ENCODE measurements at regions of chr9 and their contacts with region 1.

Region 1: GRCh38 chr9:37913480-37914153 is 9.7 kb upstream of the SLC25A51 start:
- DNase-seq: peak; percentile 65
- H3K4me3 ChIP-seq: no peak overlapping the region
- H3K27ac ChIP-seq: no peak overlapping the region
- H3K4me1 ChIP-seq: peaks cover 18% of the 10 kb centered on the region
- H3K27me3 ChIP-seq: no peaks in the 10 kb centered on the region
- CTCF ChIP-seq: peak; percentile 96 to 98

Region 2: DNA sequence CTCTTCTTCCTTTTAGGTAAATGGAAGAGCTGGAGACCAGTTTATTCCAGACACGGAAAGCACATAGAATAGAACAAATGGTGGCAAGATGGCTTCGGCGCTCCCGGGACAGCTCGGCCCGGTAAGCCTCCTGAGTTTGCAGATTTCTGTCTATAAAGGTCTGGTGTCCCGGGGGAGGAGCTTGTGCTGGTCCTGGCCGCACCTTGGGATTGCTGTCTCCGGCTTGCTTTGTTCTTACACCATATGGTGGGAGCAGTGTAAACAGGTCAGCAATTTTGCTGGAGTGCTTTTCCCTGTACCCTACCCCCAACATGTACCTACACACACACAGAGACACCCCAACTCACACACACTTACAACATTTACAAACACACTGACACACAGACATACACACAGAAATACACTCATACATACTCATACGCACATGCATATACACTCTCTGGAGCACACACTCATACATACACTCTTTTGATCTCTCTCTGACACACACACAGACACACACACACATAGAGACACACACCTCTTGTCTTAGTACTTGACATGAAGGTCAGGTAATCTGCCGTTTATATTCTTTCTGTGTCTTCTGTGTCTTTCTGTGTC is 220.9 kb before region 1 on chr9:
- CTCF ChIA-PET with region 1: no interaction called
- dilution Hi-C with region 1: no loop called
- in situ Hi-C with region 1: no loop called
- intact Hi-C with region 1: no loop called
- DNase-seq: no peak
- H3K4me3 ChIP-seq: no peak overlapping the region
- H3K27ac ChIP-seq: no peak overlapping the region
- H3K4me1 ChIP-seq: no peaks in the 10 kb centered on the region
- H3K27me3 ChIP-seq: peaks cover 4% of the 10 kb centered on the region
- CTCF ChIP-seq: no peak

Region 3: GRCh38 chr9:37976714-37977477 is 63.3 kb after region 1 on chr9:
- CTCF ChIA-PET with region 1: no interaction called
- dilution Hi-C with region 1: no loop called
- in situ Hi-C with region 1: no loop called
- intact Hi-C with region 1: no loop called
- DNase-seq: peak; percentile 79
- H3K4me3 ChIP-seq: no peak overlapping the region
- H3K27ac ChIP-seq: no peak overlapping the region
- H3K4me1 ChIP-seq: peaks cover 9% of the 10 kb centered on the region
- H3K27me3 ChIP-seq: no peaks in the 10 kb centered on the region
- CTCF ChIP-seq: no peak

Region 4: DNA sequence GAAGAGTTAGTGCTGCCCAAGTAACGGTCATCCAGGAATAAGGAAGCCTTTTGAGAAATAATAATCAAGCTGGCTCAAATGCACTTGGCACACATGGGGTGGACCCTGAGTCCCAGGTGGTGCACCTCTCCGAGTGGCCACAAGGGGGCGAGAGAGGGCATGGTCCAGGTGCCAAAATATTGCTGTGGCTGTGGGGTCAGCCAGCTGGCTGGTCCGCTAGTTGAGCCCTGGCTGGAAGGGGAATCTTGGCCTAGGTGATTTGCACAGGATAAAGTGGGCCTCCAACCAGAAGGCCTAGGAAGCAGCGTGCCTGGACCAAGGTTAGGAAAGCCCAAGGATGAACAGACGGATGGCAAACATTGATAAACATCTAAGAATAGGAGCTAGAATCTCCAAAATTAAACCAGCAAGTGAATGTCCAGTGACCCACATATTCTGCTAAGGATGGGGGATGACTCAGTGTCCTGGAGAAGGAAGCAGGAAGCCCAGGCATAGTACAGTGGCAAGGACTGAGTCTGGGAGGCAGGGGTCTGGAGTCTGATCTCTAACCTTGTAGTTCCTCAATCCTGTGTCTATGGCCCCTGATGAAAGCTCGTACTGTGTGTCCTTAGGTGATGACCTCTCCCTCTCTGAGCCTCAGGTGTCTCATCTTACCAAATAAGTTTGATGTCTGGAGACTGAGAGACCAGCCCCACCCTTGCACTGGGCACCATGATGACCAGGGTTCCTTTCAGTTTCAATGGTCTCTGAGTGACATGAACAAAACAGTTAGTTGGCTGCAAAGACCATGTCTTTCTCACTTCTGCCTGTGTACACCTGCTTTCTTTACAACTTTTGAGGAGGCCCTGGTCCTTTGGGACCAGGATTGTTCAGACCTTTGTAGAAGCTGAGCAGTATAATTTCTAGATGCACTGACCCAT is 174.6 kb after region 1 on chr9:
- CTCF ChIA-PET with region 1: no interaction called
- dilution Hi-C with region 1: no loop called
- in situ Hi-C with region 1: no loop called
- intact Hi-C with region 1: loop called (anchors 1 kb)
- DNase-seq: peak; percentile 32
- H3K4me3 ChIP-seq: no peak overlapping the region
- H3K27ac ChIP-seq: no peak overlapping the region
- H3K4me1 ChIP-seq: peaks cover 1% of the 10 kb centered on the region
- H3K27me3 ChIP-seq: no peaks in the 10 kb centered on the region
- CTCF ChIP-seq: peak; percentile 93 to 98

Region 5: GRCh38 chr9:38263532-38263931 is 349.9 kb after region 1 on chr9:
- CTCF ChIA-PET with region 1: interaction called, 5 read pairs
- dilution Hi-C with region 1: no loop called
- in situ Hi-C with region 1: loop called (anchors 5 to 10 kb)
- intact Hi-C with region 1: loop called (anchors 1 kb)
- DNase-seq: peak; percentile 31
- H3K4me3 ChIP-seq: no peak overlapping the region
- H3K27ac ChIP-seq: no peak overlapping the region
- H3K4me1 ChIP-seq: no peaks in the 10 kb centered on the region
- H3K27me3 ChIP-seq: no peaks in the 10 kb centered on the region
- CTCF ChIP-seq: peak; percentile 41 to 61

Region 6: DNA sequence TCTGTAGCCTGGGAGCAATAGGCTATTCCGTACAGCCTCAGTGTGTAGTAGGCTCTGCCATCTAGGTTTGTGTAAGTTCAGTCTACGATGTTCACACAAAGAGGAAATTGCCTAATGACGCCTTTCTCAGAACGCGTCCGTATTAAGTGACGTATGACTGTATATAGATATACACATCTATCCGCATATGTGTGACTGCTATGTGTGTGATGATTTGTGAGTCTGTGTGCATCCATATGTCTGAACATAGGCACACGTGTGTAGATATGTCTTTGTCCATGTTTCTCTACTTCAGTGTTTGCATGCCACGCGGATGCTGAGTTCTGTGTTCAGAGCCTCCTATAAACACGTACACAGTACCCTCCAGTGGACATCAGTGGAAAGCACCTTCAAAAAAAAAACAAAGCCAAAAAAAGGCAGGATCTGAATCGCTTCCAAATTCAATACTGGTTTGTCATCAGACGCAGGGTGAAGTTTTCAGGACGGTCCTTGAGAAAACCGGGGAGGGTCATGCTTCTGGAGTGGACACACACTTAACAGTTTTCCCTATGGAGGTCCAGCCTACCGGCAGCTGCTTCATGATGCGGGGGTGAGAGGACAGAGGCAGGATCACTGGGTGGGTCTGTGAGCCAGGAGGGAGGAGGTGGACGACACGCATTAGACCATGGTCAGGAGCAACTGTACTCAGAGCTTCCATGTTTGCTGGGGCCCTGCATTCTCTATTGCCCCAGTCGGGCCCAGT is 449.4 kb after region 1 on chr9:
- CTCF ChIA-PET with region 1: no interaction called
- dilution Hi-C with region 1: no loop called
- in situ Hi-C with region 1: loop called in 1 of 2 experiments (anchors 10 kb)
- intact Hi-C with region 1: loop called (anchors 1 kb)
- DNase-seq: peak; percentile 61
- H3K4me3 ChIP-seq: no peak overlapping the region
- H3K27ac ChIP-seq: no peak overlapping the region
- H3K4me1 ChIP-seq: peaks cover 3% of the 10 kb centered on the region
- H3K27me3 ChIP-seq: no peaks in the 10 kb centered on the region
- CTCF ChIP-seq: peak; percentile 60 to 71

Region 7: DNA sequence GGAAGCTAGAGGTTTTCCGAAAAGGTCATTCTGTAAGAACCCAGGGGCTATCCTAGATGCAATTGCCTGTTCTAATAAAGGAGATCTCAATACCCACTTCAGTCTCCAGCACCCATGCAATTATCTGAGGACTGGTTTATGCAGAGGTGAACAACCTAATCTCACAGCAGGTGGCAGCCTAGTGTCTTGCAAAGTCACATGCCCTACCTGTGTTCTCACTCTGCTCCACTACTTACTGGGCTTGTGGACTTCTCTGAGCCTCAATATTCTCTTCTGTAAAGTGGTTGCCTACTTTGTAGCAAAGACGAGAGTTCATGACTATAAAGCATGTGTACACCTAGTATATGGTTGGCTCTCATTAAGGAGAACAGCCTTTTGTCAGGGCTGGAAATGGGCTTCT is 457.9 kb after region 1 on chr9:
- CTCF ChIA-PET with region 1: no interaction called
- dilution Hi-C with region 1: no loop called
- in situ Hi-C with region 1: loop called (anchors 10 kb)
- intact Hi-C with region 1: no loop called
- DNase-seq: peak; percentile 52
- H3K4me3 ChIP-seq: no peak overlapping the region
- H3K27ac ChIP-seq: no peak overlapping the region
- H3K4me1 ChIP-seq: no peaks in the 10 kb centered on the region
- H3K27me3 ChIP-seq: no peaks in the 10 kb centered on the region
- CTCF ChIP-seq: peak; percentile 48 to 71

Region 8: DNA sequence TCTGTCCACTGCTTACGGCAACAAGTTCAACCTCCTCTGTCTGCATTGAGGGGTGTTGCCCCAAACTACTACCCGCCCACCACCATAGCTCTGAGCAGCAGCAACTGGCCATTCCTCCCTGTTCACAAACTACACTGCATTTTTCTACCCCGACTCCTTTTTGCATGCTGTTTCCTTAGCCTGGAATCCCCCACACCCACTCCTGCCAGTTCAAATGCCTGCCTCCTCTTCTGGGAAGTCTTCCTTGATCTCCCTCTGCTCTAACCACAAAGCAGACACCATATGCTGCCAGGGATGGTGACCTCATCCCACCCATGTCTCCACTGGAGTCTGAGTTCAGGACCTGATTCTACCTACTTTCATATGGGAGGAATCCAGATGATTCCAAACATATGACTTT is 492.2 kb after region 1 on chr9:
- CTCF ChIA-PET with region 1: no interaction called
- dilution Hi-C with region 1: no loop called
- in situ Hi-C with region 1: no loop called
- intact Hi-C with region 1: loop called (anchors 1 kb)
- DNase-seq: no peak
- H3K4me3 ChIP-seq: no peak overlapping the region
- H3K27ac ChIP-seq: no peak overlapping the region
- H3K4me1 ChIP-seq: no peaks in the 10 kb centered on the region
- H3K27me3 ChIP-seq: peaks cover 4% of the 10 kb centered on the region
- CTCF ChIP-seq: no peak